ENCODE measurements at regions of chr3 and their contacts with region 1.

Region 1: DNA sequence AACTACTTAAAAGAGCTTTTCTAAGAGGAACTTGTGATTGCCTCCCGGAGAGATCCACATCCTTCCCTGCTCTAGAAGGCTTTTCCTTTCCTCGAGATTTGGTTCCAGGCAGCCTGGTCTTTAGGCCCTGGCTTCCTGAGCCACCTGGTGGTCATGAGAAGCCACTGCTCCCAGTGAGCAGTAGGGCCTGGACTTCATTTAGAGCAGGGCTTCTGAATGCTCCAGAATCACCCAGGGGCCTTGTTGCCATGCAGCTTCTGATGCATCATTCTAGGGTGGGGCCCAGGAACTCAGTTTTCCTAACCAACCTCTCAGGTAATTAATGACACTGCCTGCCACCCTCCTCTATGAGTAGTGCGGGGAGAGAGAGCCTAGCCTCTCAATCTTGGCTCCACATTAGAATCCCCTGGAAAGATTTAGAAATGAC is 29.6 kb downstream of the PSMD6 start:
- DNase-seq: peak; percentile 64
- ATAC-seq: peak; percentile 95
- H3K4me3 ChIP-seq: no peak overlapping the region
- H3K27ac ChIP-seq: no peak overlapping the region
- H3K4me1 ChIP-seq: no peaks in the 10 kb centered on the region
- H3K27me3 ChIP-seq: no peaks in the 10 kb centered on the region
- CTCF ChIP-seq: peak; percentile 69

Region 2: GRCh38 chr3:63349583-63350521 is 643.8 kb before region 1 on chr3:
- CTCF ChIA-PET with region 1: no interaction called
- POLR2A ChIA-PET with region 1: no interaction called
- intact Hi-C with region 1: loop called (anchors 1 kb)
- DNase-seq: peak; percentile 77
- ATAC-seq: peak; percentile 84
- H3K4me3 ChIP-seq: no peak overlapping the region
- H3K27ac ChIP-seq: no peak overlapping the region
- H3K4me1 ChIP-seq: peaks cover 15% of the 10 kb centered on the region; the same call in 1 of the 2 replicates
- H3K27me3 ChIP-seq: peaks cover 15% of the 10 kb centered on the region; the same call in 1 of the 2 replicates
- CTCF ChIP-seq: peak; percentile 91

Region 3: DNA sequence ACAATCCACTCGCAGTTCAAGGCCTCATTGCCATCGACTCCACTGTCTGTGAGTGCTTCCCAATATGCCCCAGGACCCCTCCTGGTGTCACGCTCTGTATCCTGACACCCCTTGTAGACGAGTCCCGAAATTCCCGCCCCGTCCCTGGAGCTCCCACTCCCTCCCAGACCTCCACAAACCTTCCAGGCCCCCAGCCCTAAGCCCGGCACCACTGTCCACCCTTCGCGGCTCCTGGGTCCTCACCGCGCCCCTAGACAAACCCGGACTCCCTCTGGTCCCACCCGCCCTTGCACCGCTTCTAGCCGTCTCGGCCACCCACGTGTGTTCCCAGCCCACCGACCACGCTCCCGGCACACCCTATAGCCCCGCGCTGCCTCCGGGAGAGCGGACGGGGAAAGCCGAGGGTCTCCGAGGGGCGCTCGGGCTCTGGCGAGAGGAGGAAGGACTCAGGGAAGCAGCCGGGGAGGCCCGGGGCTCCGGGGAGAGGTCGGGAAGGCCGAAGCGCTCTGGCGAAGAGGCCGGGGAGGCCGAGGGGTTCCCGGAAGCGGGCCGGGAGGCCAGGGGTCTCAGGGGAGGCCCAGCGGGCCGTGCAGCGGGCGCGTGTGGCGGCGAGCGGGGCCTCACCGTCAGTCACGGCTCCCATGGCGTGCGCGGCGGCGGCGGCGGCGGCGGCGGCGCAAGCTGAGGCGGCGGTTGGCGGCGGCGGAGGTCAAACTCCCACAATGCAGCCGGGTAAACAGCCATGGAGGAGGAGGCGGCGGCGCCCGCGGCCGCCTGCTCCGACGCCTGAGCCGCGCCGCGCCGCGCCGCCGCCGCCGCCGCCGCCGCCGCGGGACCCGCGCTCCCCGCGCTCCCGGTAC is 130.3 kb before region 1 on chr3 and contains the starts of genes ATXN7 and THOC7:
- CTCF ChIA-PET with region 1: no interaction called
- POLR2A ChIA-PET with region 1: no interaction called
- intact Hi-C with region 1: loop called (anchors 5 kb)
- DNase-seq: peak; percentile 26
- ATAC-seq: peak; percentile 80
- H3K4me3 ChIP-seq: peak within 1 kb of the TSS; percentile 76
- H3K27ac ChIP-seq: peak within 1 kb of the TSS; percentile 56
- H3K4me1 ChIP-seq: 0 out of 2 replicates have a peak, but pooled peaks cover 5% of the 10 kb centered on the region
- H3K27me3 ChIP-seq: no peaks in the 10 kb centered on the region
- CTCF ChIP-seq: no peak
- total RNA-seq, gene ATXN7: 3.6 and 6.3 TPM in 2 replicates
- total RNA-seq, gene THOC7: 26.7 and 41.8 TPM in 2 replicates

Region 4: GRCh38 chr3:63961891-63962290 is 31.8 kb before region 1 on chr3:
- CTCF ChIA-PET with region 1: interaction called, 4 read pairs
- POLR2A ChIA-PET with region 1: no interaction called
- intact Hi-C with region 1: loop called (anchors 1 kb)
- DNase-seq: peak; percentile 54
- ATAC-seq: peak; percentile 63
- H3K4me3 ChIP-seq: no peak overlapping the region
- H3K27ac ChIP-seq: no peak overlapping the region
- H3K4me1 ChIP-seq: peaks cover 4% of the 10 kb centered on the region; the same call in 1 of the 2 replicates
- H3K27me3 ChIP-seq: no peaks in the 10 kb centered on the region
- CTCF ChIP-seq: peak; percentile 48; the same call in 1 of the 2 replicates

Measured in PC-3 (cell line).